ENCODE measurements at regions of chr22 and their contacts with region 1.

Region 1: GRCh38 chr22:19629720-19630419 is 84.4 kb upstream of the SEPTIN5 start:
- DNase-seq: peak; percentile 87 to 93 (median 91)
- H3K4me3 ChIP-seq: no peak overlapping the region
- H3K27ac ChIP-seq: no peak overlapping the region
- H3K4me1 ChIP-seq: no peaks in the 10 kb centered on the region
- H3K27me3 ChIP-seq: no peaks in the 10 kb centered on the region
- CTCF ChIP-seq: peak; percentile 78

Region 2: DNA sequence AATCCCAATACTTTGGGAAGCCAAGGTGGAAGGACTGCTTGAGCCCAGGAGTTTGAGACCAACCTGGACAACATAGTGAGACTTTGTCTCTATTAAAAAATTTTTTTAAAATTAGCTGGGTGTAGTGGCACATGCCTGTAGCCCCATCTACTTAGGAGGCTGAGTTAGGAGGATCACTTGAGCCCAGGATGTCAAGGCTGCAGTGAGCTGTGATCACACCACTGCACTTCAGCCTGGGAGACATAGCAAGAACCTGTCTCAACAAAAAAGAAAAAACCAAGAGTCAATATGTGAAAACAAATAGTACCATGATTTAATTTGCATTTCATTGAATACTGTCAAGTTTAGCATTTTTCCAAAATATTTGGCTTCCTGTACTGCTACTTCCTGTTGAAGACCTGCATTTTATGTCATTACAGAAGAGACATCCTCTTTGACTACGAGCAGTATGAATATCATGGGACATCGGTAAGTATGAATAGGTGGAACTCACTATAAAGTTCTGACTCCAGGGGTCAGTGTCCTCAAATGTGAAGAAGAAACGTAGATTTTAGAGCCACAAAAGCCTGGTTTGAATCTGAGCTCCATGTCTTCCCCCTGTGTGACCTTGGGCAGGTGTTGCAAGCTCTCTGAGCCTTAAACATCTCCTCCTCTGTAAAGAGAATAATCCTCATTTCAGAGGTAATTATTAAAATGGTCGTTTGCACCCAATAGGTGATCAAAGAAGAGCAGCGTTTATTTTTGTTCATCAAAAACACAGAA is 134.1 kb before region 1 on chr22:
- intact Hi-C with region 1: loop called (anchors 10 kb)
- DNase-seq: peak in 1 of 5 donors; percentile 49
- H3K4me3 ChIP-seq: no peak overlapping the region
- H3K27ac ChIP-seq: no peak overlapping the region
- H3K4me1 ChIP-seq: no peaks in the 10 kb centered on the region
- H3K27me3 ChIP-seq: no peaks in the 10 kb centered on the region
- CTCF ChIP-seq: peak; percentile 24

Region 3: GRCh38 chr22:19663286-19663815 is 33.5 kb after region 1 on chr22:
- intact Hi-C with region 1: no loop called
- DNase-seq: peak in 2 of 5 donors; percentile 42 to 66
- H3K4me3 ChIP-seq: no peak overlapping the region
- H3K27ac ChIP-seq: no peak overlapping the region
- H3K4me1 ChIP-seq: no peaks in the 10 kb centered on the region
- H3K27me3 ChIP-seq: no peaks in the 10 kb centered on the region
- CTCF ChIP-seq: no peak

Region 4: GRCh38 chr22:20090348-20091240 is 460.7 kb after region 1 on chr22:
- intact Hi-C with region 1: no loop called
- DNase-seq: peak in 1 of 5 donors; percentile 39
- H3K4me3 ChIP-seq: no peak overlapping the region
- H3K27ac ChIP-seq: no peak overlapping the region
- H3K4me1 ChIP-seq: peaks cover 0 to 5% (median 0%) of the 10 kb centered on the region in 3 donors
- H3K27me3 ChIP-seq: no peaks in the 10 kb centered on the region
- CTCF ChIP-seq: no peak